Astrocyte of the cerebellum (primary cell): ENCODE measurements at regions of chr6 and their contacts with region 1.

Region 1: GRCh38 chr6:1123386-1124375 is 188.2 kb upstream of the FOXQ1 start:
- DNase-seq: no peak
- H3K4me3 ChIP-seq: no peak overlapping the region
- CTCF ChIP-seq: no peak

Region 2: DNA sequence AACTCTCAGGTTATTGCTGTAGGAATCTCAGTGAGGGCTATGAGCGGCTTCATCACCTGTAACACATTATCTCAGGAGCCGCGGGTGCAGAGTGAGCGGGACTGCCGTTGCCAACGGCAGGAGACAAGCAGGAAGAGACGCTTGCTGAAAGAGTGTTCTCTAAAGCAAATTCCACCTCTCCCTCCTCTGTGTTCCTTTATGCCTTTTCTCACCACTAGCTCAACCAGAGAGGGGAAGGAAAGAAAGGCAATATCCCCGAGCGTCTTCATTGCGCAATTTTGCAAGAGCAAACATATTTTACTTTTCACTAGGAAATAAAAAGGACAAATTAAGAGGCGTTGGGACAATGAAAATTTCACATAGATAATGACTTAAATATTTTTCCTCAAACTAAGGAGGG is 245.5 kb before region 1 on chr6:
- in situ Hi-C with region 1: no loop called
- DNase-seq: no peak
- H3K4me3 ChIP-seq: no peak overlapping the region
- CTCF ChIP-seq: no peak

Region 3: DNA sequence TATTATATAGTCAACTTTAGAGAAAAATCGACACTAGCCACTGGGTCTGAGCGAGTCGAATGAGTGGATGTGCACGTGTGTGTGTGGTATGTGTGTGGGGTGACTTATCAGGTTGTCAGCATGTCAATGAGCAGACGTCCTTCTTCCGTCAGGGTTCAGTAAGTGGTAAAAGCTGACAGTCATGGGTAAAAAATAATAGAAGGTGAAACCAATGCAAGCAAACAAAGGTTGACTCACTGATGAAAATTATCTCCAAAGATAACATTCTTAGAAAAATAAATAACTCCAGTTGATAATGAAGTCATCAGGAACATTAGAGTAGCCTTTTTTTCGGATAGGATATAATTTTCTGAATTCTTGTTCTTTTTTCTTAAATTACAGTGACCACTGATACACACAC is 55.6 kb before region 1 on chr6:
- in situ Hi-C with region 1: loop called (anchors 5 kb)
- DNase-seq: no peak
- H3K4me3 ChIP-seq: no peak overlapping the region
- CTCF ChIP-seq: no peak

Region 4: DNA sequence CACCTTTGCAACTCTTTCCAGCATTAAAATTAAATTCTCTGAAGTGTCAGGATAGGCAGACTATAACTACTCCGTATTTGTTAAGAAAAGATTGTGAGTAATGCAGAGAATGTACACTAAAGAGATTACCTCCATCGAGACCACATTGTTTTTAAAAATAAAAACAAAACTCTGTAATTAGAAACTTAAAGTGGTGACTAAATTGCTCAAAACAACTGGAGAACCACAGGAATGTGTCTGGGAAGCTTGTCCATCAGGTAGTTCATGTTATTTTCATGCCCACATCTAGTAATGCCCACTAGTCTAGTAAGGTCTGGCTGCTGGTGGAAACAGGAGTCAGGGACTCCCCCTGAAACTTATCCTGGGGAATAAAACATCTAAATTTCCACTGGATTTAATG is 85.2 kb after region 1 on chr6:
- in situ Hi-C with region 1: loop called (anchors 5 kb)
- DNase-seq: no peak
- H3K4me3 ChIP-seq: no peak overlapping the region
- CTCF ChIP-seq: no peak